CD8-positive, alpha-beta T cell (primary cell): ENCODE measurements at regions of chr6 and their contacts with region 1.

Region 1: DNA sequence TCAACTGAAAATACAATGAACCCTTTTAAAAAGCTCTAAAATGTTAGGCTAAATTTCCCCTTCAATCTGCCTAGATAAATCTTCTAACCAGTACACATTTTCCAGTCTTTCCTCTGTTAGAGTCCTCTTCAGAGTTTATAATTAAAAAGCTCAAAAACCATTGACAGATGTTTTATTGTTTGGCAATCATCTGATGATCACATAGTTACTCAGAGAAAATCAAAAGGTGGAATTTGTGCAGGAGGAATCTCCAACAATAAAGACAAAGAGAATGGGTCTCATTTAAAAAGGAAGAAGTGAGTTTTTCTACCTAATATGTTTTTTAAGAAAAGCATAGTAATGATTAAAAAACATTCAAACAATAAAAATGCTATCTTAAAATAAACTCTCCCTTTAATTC is 3.1 kb downstream of the TRAPPC3L start:
- DNase-seq: no peak
- ATAC-seq: no peak
- H3K4me3 ChIP-seq: no peak overlapping the region
- H3K4me3 Mint-ChIP-seq: no peak overlapping the region
- H3K27ac ChIP-seq: no peak overlapping the region
- H3K27ac Mint-ChIP-seq: no peak overlapping the region
- H3K4me1 ChIP-seq: no peaks in the 10 kb centered on the region
- H3K4me1 Mint-ChIP-seq: no peaks in the 10 kb centered on the region
- H3K27me3 ChIP-seq: peaks cover 0 to 2% of the 10 kb centered on the region in 2 experiments
- H3K27me3 Mint-ChIP-seq: peaks cover 16% of the 10 kb centered on the region
- CTCF ChIP-seq: no peak

Region 2: DNA sequence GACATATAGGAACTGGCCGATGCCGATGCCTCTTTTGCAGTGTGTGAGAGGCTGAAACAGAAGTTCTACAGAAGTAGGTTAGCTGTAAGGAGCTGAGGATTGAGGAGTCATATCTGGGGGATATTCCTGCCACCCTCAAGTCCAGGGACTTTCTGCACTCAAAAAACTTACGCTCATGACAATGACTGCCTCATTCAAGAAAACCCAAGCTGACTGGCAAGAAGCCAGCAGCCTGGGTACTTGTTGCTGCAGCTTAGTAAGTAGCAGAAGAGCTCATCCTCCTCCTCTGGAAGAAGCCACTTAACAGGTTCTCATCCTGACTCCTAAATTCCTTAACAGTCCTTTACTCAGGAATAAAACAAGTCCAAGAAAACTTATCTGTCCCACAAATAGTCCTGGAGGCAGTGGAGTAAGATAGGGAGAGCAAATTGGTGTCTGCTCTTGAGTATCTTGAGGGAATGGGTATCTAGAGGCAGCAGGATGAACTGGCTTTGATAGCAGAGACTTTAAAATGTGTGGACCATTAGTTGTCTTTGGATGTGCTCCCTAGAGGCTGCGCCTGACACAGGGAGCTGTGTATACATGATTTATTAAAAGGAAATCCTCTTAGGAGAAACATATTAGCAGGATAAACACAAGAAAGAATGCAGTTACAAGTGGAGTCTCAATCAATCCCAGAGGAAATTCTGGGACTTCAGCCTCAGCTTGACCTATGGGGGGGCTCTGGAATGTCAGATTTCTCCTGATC is 23.6 kb before region 1 on chr6:
- CTCF ChIA-PET with region 1: no interaction called
- POLR2A ChIA-PET with region 1: no interaction called
- intact Hi-C with region 1: no loop called
- DNase-seq: no peak
- ATAC-seq: no peak
- H3K4me3 ChIP-seq: no peak overlapping the region
- H3K4me3 Mint-ChIP-seq: no peak overlapping the region
- H3K27ac ChIP-seq: no peak overlapping the region
- H3K27ac Mint-ChIP-seq: no peak overlapping the region
- H3K4me1 ChIP-seq: no peaks in the 10 kb centered on the region
- H3K4me1 Mint-ChIP-seq: no peaks in the 10 kb centered on the region
- H3K27me3 ChIP-seq: no peaks in the 10 kb centered on the region
- H3K27me3 Mint-ChIP-seq: peaks cover 3% of the 10 kb centered on the region
- CTCF ChIP-seq: no peak

Region 3: DNA sequence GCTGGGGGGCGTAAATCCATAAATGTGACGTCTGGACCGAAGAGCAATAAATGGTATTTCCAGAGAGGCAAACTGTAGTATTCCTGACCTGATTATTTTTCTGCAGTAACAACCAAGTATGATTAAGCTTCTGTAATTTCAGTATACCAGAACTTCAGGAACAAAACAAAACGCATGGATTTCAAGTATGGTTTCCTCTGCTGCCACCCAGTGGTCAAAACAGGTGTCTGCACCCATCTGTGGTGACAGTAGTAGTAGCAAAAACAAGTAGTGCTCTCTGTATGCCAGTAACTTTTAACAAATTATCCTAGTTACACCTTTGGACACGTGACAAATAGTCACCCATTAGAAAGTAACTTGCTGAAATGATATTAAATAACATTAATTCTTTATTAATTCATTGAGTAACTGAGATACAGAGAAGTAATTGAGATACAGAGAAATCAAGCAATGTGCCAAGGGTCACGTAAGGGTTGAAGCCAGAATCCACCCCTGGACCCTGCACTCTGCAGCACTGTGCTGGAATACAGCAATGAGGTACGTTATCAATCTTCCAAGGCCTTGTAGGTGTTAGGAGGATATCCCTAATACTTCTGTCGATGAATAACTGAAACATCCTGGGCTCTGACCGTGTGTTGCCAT is 19.1 kb after region 1 on chr6:
- CTCF ChIA-PET with region 1: interaction called, 16 read pairs
- POLR2A ChIA-PET with region 1: interaction called, 3 read pairs
- intact Hi-C with region 1: loop called in 1 of 2 experiments (anchors 2 kb)
- DNase-seq: peak; percentile 29 to 77 (median 67)
- ATAC-seq: peak; percentile 93
- H3K4me3 ChIP-seq: no peak overlapping the region
- H3K4me3 Mint-ChIP-seq: no peak overlapping the region
- H3K27ac ChIP-seq: no peak overlapping the region
- H3K27ac Mint-ChIP-seq: no peak overlapping the region
- H3K4me1 ChIP-seq: no peaks in the 10 kb centered on the region
- H3K4me1 Mint-ChIP-seq: peaks cover 3% of the 10 kb centered on the region
- H3K27me3 ChIP-seq: no peaks in the 10 kb centered on the region
- H3K27me3 Mint-ChIP-seq: peaks cover 9% of the 10 kb centered on the region
- CTCF ChIP-seq: peak; percentile 95